H1 (cell line): ENCODE measurements at regions of chr6 and their contacts with region 1.

Region 1: GRCh38 chr6:89400912-89401399 is 11.1 kb downstream of the RRAGD start:
- DNase-seq: no peak
- H3K4me3 ChIP-seq: no peak overlapping the region
- H3K27ac ChIP-seq: no peak overlapping the region
- H3K4me1 ChIP-seq: peaks cover under 1 to 7% (median 2%) of the 10 kb centered on the region in 4 experiments; a peak in 6 of 7 replicates
- H3K27me3 ChIP-seq: no peaks in the 10 kb centered on the region
- CTCF ChIP-seq: no peak
- EP300 ChIP-seq: no peak
- POLR2A ChIP-seq: no peak
- RAD21 ChIP-seq: no peak

Region 2: GRCh38 chr6:89412071-89413005 is 11.4 kb after region 1 on chr6 and contains the start of gene RRAGD:
- CTCF ChIA-PET with region 1: interaction called, 11 read pairs
- POLR2A ChIA-PET with region 1: interaction called, 3 read pairs
- DNase-seq: peak in 1 of 2 experiments; percentile 67
- H3K4me3 ChIP-seq: peak within 1 kb of the TSS; percentile 63 to 98 (median 68)
- H3K27ac ChIP-seq: no peak within 1 kb of the TSS
- H3K4me1 ChIP-seq: peaks cover 10 to 11% (median 10%) of the 10 kb centered on the region in 4 experiments; a peak in 6 of 7 replicates
- H3K27me3 ChIP-seq: peaks cover 2 to 19% (median 16%) of the 10 kb centered on the region in 4 experiments
- CTCF ChIP-seq: no peak
- EP300 ChIP-seq: no peak
- POLR2A ChIP-seq: no peak
- RAD21 ChIP-seq: no peak
- total RNA-seq, gene RRAGD: 29.7 and 30.8 TPM in 2 replicates

Region 3: DNA sequence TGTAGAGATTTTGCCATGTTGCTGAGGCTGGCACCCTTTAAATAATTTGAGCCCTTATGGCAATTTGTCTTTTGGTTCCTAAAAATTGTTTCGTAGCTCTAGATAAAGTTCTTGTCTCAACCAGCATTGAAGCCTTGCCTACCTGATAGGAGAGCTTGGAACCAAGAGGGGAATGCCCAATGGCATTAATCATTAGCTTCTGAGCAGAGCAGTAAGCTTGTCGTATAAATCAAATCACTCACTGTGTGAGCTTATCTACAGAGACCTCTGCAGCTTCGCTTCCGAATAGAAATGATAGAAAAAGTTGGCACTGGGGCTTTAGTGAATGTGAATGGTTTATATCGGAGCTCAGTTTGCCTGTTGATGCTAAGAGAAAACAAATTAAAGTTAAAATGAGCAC is 42.7 kb after region 1 on chr6:
- CTCF ChIA-PET with region 1: no interaction called
- POLR2A ChIA-PET with region 1: no interaction called
- DNase-seq: no peak
- H3K4me3 ChIP-seq: no peak overlapping the region
- H3K27ac ChIP-seq: no peak overlapping the region
- H3K4me1 ChIP-seq: no peaks in the 10 kb centered on the region
- H3K27me3 ChIP-seq: peaks cover 0 to 6% (median 0%) of the 10 kb centered on the region in 4 experiments; a peak in 1 of 7 replicates
- CTCF ChIP-seq: no peak
- EP300 ChIP-seq: no peak
- POLR2A ChIP-seq: no peak
- RAD21 ChIP-seq: no peak

Region 4: GRCh38 chr6:89454301-89454700 is 53.3 kb after region 1 on chr6:
- CTCF ChIA-PET with region 1: no interaction called
- POLR2A ChIA-PET with region 1: no interaction called
- DNase-seq: no peak
- H3K4me3 ChIP-seq: no peak overlapping the region
- H3K27ac ChIP-seq: no peak overlapping the region
- H3K4me1 ChIP-seq: no peaks in the 10 kb centered on the region
- H3K27me3 ChIP-seq: no peaks in the 10 kb centered on the region
- CTCF ChIP-seq: no peak
- EP300 ChIP-seq: no peak
- POLR2A ChIP-seq: no peak
- RAD21 ChIP-seq: no peak

Region 5: DNA sequence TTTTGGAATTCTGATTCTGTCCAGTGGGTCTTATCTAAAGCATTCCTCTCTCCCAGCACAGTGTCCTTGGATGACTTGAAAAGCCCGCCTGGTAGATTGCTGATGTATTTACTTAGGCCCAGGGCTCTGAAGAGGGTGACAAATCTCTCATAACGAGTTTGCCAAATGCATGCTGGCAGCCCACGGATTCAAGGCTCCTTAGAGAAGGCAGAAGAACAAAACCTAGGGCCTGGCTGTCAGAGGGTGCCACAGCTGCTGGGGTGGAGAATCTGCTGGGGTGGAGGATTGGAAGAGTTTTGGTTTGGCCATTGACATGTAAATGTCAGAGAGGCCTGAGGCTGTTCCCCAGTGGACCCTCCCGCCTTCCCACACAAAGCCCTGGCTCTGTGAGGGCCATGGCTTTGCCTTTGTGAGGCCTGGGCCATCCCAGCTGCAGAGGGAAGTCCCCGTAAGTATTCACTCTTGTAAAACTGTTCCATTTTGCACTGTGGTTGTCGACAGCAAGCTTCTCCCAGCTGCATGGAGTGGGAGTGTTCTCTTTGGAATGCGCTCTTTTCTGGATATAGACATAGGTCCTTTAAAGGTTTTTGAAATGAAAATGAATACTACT is 82.3 kb after region 1 on chr6:
- CTCF ChIA-PET with region 1: no interaction called
- POLR2A ChIA-PET with region 1: no interaction called
- DNase-seq: peak; percentile 59 to 62
- H3K4me3 ChIP-seq: peak overlapping the region in 1 of 4 experiments; percentile 26; a peak in 1 of 8 replicates
- H3K27ac ChIP-seq: no peak overlapping the region
- H3K4me1 ChIP-seq: peaks cover 3 to 23% (median 7%) of the 10 kb centered on the region in 4 experiments
- H3K27me3 ChIP-seq: no peaks in the 10 kb centered on the region
- CTCF ChIP-seq: no peak
- EP300 ChIP-seq: peak; percentile 19 to 94; a peak in 1 of 3 replicates
- POLR2A ChIP-seq: no peak
- RAD21 ChIP-seq: peak in 1 of 2 experiments; percentile 19; a peak in 2 of 4 replicates